ENCODE measurements at regions of chr22 and their contacts with region 1.

Region 1: DNA sequence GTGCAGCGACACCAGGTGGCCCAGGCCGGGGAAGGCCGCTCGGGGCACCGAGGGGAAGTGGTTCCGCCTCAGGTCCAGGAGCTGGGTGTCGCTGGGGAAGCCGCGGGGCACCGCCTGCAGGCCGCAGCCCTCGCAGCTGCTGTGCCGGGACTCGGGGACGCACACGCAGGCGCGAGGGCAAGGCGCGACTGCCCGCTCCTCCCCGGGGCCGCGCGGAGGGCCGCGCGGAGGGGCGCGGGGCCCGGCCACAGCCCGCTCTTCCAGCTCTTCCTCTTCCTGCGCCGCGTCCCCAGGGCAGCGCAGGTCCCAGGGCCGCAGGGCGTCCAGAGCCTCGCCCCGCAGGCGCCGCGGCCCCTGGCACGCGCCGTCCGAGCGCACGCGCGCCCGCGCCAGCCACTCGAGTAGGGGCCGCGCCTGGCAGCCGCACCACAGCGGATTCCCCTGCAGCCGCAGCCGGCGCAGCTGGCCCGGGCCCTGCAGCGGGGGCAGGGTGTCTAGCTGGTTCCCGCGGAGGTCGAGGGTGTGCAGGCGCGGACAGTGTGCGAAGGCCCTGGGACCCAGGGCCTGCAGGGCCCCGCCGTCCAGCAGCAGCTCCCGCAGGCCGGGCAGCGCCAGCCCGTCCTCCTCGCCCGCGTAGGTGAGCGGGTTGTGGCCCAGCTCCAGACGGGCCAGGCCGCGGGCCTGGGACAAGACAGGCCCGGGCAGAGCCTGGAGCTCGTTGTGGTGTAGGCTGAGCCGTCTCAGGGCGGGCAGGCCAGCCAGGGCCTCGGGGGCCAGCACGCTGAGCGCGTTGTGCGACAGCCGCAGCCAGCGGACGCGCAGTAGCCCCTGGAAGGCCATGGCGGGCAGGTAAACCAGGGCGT is 2.8 kb downstream of the CHADL start:
- DNase-seq: peak; percentile 67
- H3K4me3 ChIP-seq: peak overlapping the region in 2 of 3 experiments; percentile 47
- H3K27ac ChIP-seq: no peak overlapping the region
- H3K4me1 ChIP-seq: peaks cover 20% of the 10 kb centered on the region
- H3K27me3 ChIP-seq: no peaks in the 10 kb centered on the region
- CTCF ChIP-seq: peak; percentile 30 to 79

Region 2: GRCh38 chr22:41181349-41182241 is 56.3 kb before region 1 on chr22:
- CTCF ChIA-PET with region 1: no interaction called
- dilution Hi-C with region 1: no loop called
- in situ Hi-C with region 1: no loop called
- intact Hi-C with region 1: loop called (anchors 5 kb)
- DNase-seq: peak; percentile 59
- H3K4me3 ChIP-seq: no peak overlapping the region
- H3K27ac ChIP-seq: no peak overlapping the region
- H3K4me1 ChIP-seq: peaks cover 10% of the 10 kb centered on the region
- H3K27me3 ChIP-seq: no peaks in the 10 kb centered on the region
- CTCF ChIP-seq: no peak

Measured in mammary epithelial cell (primary cell).